Prostate gland (tissue), 2 donors: ENCODE measurements at regions of chr5 and their contacts with region 1.

Region 1: DNA sequence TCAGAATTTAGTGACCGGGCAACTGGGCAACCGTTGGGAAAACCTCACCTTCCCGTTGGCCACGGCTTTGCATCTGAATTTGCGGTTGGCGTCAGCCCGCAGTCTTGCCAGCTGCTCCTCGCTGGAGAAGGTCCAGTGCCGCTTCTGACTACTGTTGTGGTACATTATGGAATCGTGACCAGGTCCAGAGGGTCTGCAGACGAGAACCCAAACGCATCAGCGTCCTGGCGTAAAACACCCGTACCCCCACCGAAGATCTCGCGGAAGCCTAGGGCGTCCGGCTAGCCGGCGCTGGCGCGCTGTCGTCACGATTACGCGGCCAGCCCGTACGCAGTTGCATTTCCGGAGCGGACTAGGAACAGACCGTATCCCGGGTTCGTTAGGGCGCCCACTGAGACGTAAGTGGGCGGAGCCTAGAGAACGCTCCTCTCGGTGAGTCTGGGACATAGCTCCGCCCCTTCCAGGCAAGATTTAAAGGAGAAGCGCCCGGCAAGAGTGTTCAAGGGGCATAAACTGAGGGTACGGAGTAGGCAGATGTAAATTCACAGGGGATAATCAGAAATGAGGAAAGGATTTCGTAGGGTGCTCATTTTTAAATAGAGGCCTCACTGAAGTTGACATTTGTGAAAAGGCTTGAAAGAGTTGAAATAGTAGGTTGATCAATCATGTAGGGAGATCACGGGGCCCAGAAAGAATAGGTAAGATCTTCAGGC is at the start of gene CCNH:
- DNase-seq: peak; percentile 99
- H3K4me3 ChIP-seq: peak within 1 kb of the TSS; percentile 58 to 77
- H3K27ac ChIP-seq: peak within 1 kb of the TSS; percentile 90 to 97
- H3K4me1 ChIP-seq: no peaks in the 10 kb centered on the region
- H3K27me3 ChIP-seq: no peaks in the 10 kb centered on the region
- CTCF ChIP-seq: peak in 2 of 4 experiments; percentile 22 to 36
- POLR2A ChIP-seq: peak; percentile 87
- total RNA-seq, gene CCNH: 62.8 to 87.6 TPM

Region 2: GRCh38 chr5:87267574-87268125 is 145.1 kb before region 1 on chr5 and contains the start of gene RASA1:
- intact Hi-C with region 1: loop called (anchors 5 kb)
- DNase-seq: peak; percentile 94
- H3K4me3 ChIP-seq: peak within 1 kb of the TSS; percentile 92 to 96
- H3K27ac ChIP-seq: peak within 1 kb of the TSS; percentile 92 to 93
- H3K4me1 ChIP-seq: peaks cover 4% of the 10 kb centered on the region
- H3K27me3 ChIP-seq: no peaks in the 10 kb centered on the region
- CTCF ChIP-seq: peak in 1 of 4 experiments; percentile 18
- POLR2A ChIP-seq: peak; percentile 86
- total RNA-seq, gene RASA1: 22.2 to 36.8 TPM

Region 3: GRCh38 chr5:89246252-89246651 is 1833.5 kb after region 1 on chr5:
- intact Hi-C with region 1: no loop called
- DNase-seq: no peak
- H3K4me3 ChIP-seq: no peak overlapping the region
- H3K27ac ChIP-seq: no peak overlapping the region
- H3K4me1 ChIP-seq: no peaks in the 10 kb centered on the region
- H3K27me3 ChIP-seq: no peaks in the 10 kb centered on the region
- CTCF ChIP-seq: no peak
- POLR2A ChIP-seq: no peak